SK-N-SH (cell line): ENCODE measurements at regions of chr14 and their contacts with region 1.

Region 1: GRCh38 chr14:23120541-23121251 is 1.6 kb upstream of the CEBPE start:
- DNase-seq: peak; percentile 92
- H3K4me3 ChIP-seq: no peak overlapping the region; a peak in 1 of 4 replicates
- H3K27ac ChIP-seq: no peak overlapping the region
- H3K4me1 ChIP-seq: no peaks in the 10 kb centered on the region; a peak in 2 of 4 replicates
- H3K27me3 ChIP-seq: no peaks in the 10 kb centered on the region; the same call in 1 of the 2 replicates
- CTCF ChIP-seq: peak; percentile 100
- EP300 ChIP-seq: no peak
- RAD21 ChIP-seq: peak; percentile 96

Region 2: GRCh38 chr14:23068476-23069412 is 52.0 kb before region 1 on chr14:
- CTCF ChIA-PET with region 1: interaction called, 16 read pairs
- POLR2A ChIA-PET with region 1: no interaction called
- DNase-seq: peak; percentile 89
- H3K4me3 ChIP-seq: peak overlapping the region in 1 of 2 experiments; percentile 50; a peak in 1 of 4 replicates
- H3K27ac ChIP-seq: peak overlapping the region; percentile 35 to 40; a peak in 3 of 4 replicates
- H3K4me1 ChIP-seq: peaks cover 20 to 35% of the 10 kb centered on the region in 2 experiments
- H3K27me3 ChIP-seq: no peaks in the 10 kb centered on the region
- CTCF ChIP-seq: peak; percentile 99
- EP300 ChIP-seq: no peak
- RAD21 ChIP-seq: peak; percentile 77

Region 3: DNA sequence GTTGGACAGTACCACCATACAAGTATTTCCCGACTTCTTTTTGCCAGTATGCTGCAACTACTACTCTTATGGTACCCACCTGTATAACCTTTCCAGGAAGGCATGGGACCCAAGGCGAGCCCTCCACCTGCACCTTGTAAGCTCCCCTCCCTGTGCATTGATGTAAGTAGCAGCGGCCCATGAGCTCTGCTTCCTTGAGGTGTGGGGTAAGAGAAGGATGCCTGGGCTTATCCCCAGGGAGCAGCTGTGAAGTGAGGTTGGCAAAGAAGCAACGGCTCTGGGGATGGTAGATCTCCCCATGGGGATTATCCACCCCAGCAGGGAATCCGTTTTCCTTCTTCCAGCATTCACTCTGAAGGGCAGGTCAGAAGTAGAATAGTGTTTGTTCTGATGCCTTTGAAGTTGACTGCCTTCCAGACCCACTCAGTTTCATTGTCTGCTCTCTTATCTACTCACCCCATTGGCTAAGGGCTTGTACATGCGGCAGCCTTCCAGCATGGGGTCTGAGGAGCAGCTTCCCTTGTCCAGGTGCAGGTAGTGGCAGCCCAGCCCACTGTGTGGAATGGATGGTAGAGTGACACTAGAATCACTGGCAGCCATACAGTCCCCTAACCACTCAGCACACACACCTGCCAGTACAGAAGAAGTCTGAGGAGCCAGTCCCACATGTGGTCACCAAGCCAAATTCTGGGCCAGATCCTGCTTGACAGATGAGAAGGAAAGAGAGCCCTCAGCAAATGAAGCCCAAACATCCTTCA is 19.3 kb before region 1 on chr14:
- CTCF ChIA-PET with region 1: interaction called, 19 read pairs
- POLR2A ChIA-PET with region 1: no interaction called
- DNase-seq: no peak
- H3K4me3 ChIP-seq: no peak overlapping the region
- H3K27ac ChIP-seq: no peak overlapping the region
- H3K4me1 ChIP-seq: peaks cover 3 to 13% of the 10 kb centered on the region in 2 experiments; a peak in 2 of 4 replicates
- H3K27me3 ChIP-seq: no peaks in the 10 kb centered on the region
- CTCF ChIP-seq: no peak
- EP300 ChIP-seq: no peak
- RAD21 ChIP-seq: no peak

Region 4: DNA sequence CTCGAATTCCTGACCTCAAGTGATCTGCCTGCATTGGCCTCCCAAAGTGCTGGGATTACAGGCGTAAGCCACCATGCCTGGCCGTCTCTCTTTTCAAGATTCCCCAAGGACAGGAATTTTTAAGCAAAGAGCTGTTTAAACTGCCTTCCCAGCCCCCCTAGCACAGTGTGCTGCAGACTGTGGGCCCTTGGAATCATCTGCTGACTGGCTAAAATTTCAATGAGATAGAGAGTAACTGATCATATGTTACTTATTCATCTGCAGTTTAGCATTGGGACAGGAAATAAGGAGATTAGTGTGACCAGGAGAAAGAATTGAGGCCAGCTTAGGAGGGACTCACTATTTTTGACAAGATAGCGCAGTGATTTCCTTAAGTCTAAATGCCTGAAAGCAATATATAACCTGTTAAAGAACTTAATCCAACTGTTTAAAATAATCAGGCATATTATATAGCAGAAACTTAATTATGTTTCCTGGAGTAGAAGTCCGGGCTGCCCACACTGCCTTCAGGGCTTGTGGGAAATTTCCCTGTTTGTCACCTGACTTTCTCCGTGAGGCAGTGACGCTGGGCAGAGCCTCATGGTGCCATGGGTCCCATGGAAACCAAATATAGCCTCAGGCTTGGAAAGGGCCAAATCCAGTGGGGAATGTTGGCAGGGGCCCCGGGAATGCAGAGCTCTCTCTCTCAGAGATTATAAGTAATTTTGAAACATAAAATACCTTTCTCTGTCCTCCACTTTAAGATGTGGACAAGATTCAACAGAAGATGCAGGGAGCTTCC is 21.2 kb after region 1 on chr14:
- CTCF ChIA-PET with region 1: interaction called, 28 read pairs
- POLR2A ChIA-PET with region 1: no interaction called
- DNase-seq: peak; percentile 39
- H3K4me3 ChIP-seq: no peak overlapping the region
- H3K27ac ChIP-seq: no peak overlapping the region
- H3K4me1 ChIP-seq: no peaks in the 10 kb centered on the region; a peak in 1 of 4 replicates
- H3K27me3 ChIP-seq: no peaks in the 10 kb centered on the region; the same call in 1 of the 2 replicates
- CTCF ChIP-seq: no peak
- EP300 ChIP-seq: no peak
- RAD21 ChIP-seq: no peak

Region 5: DNA sequence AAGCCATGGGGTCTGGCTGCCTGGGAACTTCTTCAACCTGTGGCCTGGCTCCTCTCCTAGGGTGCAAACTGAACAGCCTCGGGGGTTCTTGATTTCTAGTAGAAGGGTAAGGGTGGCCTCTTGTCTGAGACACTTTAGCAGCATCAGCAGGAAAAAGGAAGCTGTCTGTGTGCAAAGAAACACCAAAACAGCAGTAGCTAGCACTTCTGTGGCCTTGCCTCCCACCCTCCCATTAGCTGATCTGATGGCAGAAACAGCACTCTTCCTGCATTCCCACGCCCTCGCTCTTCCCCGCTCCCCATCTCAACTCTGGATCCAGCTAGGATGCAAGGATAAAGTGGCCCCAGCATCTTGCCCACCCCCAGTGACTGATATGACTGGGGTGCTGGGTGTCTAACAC is 42.1 kb after region 1 on chr14:
- CTCF ChIA-PET with region 1: interaction called, 53 read pairs
- POLR2A ChIA-PET with region 1: no interaction called
- DNase-seq: no peak
- H3K4me3 ChIP-seq: no peak overlapping the region
- H3K27ac ChIP-seq: no peak overlapping the region
- H3K4me1 ChIP-seq: peaks cover 0 to 17% of the 10 kb centered on the region in 2 experiments; a peak in 2 of 4 replicates
- H3K27me3 ChIP-seq: no peaks in the 10 kb centered on the region
- CTCF ChIP-seq: no peak
- EP300 ChIP-seq: no peak
- RAD21 ChIP-seq: no peak

Region 6: DNA sequence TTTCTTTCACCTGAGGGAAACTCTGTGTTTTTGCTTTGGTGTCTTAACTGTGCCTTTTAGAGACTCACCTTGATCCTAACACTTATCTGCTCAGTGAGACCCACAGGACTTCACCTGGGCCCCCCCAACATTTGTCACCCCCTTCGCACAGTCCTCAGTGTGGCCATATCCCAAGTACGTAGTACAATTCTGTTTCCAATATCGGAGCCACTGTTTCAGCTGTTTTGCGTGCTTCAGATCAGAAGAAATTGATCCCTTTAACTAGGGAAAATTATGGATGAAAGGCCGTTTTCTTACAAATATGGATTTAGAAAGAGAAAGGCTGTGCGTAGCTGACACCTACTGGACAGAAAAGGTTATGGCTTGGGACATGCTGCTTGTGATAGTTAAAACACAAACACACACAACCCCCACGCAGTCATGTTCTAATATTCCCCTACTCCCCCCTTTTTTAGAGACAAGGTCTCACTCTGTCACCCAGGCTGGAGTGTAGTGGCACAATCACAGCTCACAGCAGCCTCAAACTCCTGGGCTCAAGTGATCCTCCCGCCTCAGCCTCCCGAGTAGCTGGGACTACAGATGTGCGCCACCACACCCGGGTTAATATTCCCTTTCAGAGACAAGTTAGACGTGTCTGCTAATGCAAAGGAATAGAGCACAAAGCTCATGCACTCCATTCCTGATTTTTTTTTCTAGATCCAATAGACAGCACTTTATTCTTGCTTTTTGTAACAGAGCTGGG is 66.4 kb after region 1 on chr14:
- CTCF ChIA-PET with region 1: interaction called, 495 read pairs
- POLR2A ChIA-PET with region 1: interaction called, 3 read pairs
- DNase-seq: peak; percentile 63
- H3K4me3 ChIP-seq: no peak overlapping the region; a peak in 1 of 4 replicates
- H3K27ac ChIP-seq: no peak overlapping the region
- H3K4me1 ChIP-seq: peaks cover 0 to 2% of the 10 kb centered on the region in 2 experiments; a peak in 1 of 4 replicates
- H3K27me3 ChIP-seq: peaks cover 20% of the 10 kb centered on the region
- CTCF ChIP-seq: peak; percentile 85
- EP300 ChIP-seq: no peak
- RAD21 ChIP-seq: peak; percentile 91

Region 7: GRCh38 chr14:23237772-23238594 is 117.3 kb after region 1 on chr14 and contains the start of gene RNF212B:
- CTCF ChIA-PET with region 1: interaction called, 10 read pairs
- POLR2A ChIA-PET with region 1: no interaction called
- DNase-seq: peak; percentile 88
- H3K4me3 ChIP-seq: peak within 1 kb of the TSS in 1 of 2 experiments; percentile 38; a peak in 1 of 4 replicates
- H3K27ac ChIP-seq: no peak within 1 kb of the TSS
- H3K4me1 ChIP-seq: peaks cover 0 to 4% of the 10 kb centered on the region in 2 experiments; a peak in 1 of 4 replicates
- H3K27me3 ChIP-seq: peaks cover 50% of the 10 kb centered on the region; the same call in 1 of the 2 replicates
- CTCF ChIP-seq: no peak
- EP300 ChIP-seq: no peak
- RAD21 ChIP-seq: no peak
- polyA plus RNA-seq, gene RNF212B: not detected in 2 replicates

Region 8: GRCh38 chr14:23528555-23528954 is 407.9 kb after region 1 on chr14:
- CTCF ChIA-PET with region 1: no interaction called
- POLR2A ChIA-PET with region 1: no interaction called
- DNase-seq: peak; percentile 59
- H3K4me3 ChIP-seq: no peak overlapping the region
- H3K27ac ChIP-seq: no peak overlapping the region; a peak in 1 of 4 replicates
- H3K4me1 ChIP-seq: peaks cover 0 to 4% of the 10 kb centered on the region in 2 experiments; a peak in 1 of 4 replicates
- H3K27me3 ChIP-seq: no peaks in the 10 kb centered on the region
- CTCF ChIP-seq: peak; percentile 33; the same call in 1 of the 2 replicates
- EP300 ChIP-seq: no peak
- RAD21 ChIP-seq: no peak